Prostate gland (tissue), 2 donors: ENCODE measurements at regions of chr4 and their contacts with region 1.

Region 1: GRCh38 chr4:119729835-119730670 is 101.4 kb upstream of the PDE5A start:
- DNase-seq: peak; percentile 32
- H3K4me3 ChIP-seq: no peak overlapping the region
- H3K27ac ChIP-seq: no peak overlapping the region
- H3K4me1 ChIP-seq: no peaks in the 10 kb centered on the region
- H3K27me3 ChIP-seq: no peaks in the 10 kb centered on the region
- CTCF ChIP-seq: no peak
- POLR2A ChIP-seq: no peak

Region 2: DNA sequence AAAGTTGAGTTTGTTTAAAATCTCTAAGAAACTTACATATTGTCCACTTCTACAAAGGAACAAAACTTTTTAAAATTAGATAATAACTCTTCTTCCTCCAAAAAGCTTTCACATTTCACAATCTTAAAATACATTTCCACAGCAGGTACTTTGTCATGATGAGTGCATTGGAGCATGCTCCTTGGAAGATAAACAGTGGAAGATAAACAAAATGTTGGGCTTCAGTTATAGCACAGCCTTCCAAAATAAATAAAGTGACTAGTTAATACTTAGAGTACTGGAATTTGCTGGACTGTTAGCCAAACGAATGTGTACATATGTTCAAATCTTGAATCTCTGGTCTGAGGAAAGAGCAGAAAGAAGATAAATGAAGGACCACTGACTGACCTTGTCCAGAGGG is 46.5 kb before region 1 on chr4:
- intact Hi-C with region 1: loop called (anchors 5 kb)
- DNase-seq: peak; percentile 45
- H3K4me3 ChIP-seq: no peak overlapping the region
- H3K27ac ChIP-seq: peak overlapping the region in 1 of 2 donors; percentile 21
- H3K4me1 ChIP-seq: peaks cover 3% of the 10 kb centered on the region
- H3K27me3 ChIP-seq: no peaks in the 10 kb centered on the region
- CTCF ChIP-seq: no peak
- POLR2A ChIP-seq: no peak

Region 3: DNA sequence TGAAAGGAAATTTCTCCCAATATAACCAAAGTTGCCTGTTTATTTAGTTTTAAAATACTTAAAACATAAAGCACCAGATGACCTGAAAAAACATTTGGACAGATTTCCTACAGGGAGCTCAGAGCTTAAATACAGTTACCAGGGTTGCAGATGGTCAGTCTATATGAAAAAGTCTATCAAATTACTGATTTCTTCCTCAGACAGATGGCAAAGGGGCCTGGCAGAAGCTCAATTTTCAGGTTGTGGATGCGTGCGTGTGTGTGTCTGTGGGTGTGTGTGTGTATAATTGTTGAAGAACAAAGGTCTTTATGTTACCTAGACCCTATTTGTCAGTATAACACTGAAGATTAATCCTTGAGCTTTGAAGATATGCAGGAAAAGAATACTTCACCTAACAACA is 167.2 kb after region 1 on chr4:
- intact Hi-C with region 1: loop called (anchors 10 kb)
- DNase-seq: no peak
- H3K4me3 ChIP-seq: no peak overlapping the region
- H3K27ac ChIP-seq: no peak overlapping the region
- H3K4me1 ChIP-seq: no peaks in the 10 kb centered on the region
- H3K27me3 ChIP-seq: no peaks in the 10 kb centered on the region
- CTCF ChIP-seq: no peak
- POLR2A ChIP-seq: no peak

Region 4: GRCh38 chr4:119939071-119939995 is 209.3 kb after region 1 on chr4:
- intact Hi-C with region 1: loop called (anchors 5 kb)
- DNase-seq: no peak
- H3K4me3 ChIP-seq: no peak overlapping the region
- H3K27ac ChIP-seq: peak overlapping the region in 1 of 2 donors; percentile 35
- H3K4me1 ChIP-seq: no peaks in the 10 kb centered on the region
- H3K27me3 ChIP-seq: no peaks in the 10 kb centered on the region
- CTCF ChIP-seq: no peak
- POLR2A ChIP-seq: no peak

Region 5: DNA sequence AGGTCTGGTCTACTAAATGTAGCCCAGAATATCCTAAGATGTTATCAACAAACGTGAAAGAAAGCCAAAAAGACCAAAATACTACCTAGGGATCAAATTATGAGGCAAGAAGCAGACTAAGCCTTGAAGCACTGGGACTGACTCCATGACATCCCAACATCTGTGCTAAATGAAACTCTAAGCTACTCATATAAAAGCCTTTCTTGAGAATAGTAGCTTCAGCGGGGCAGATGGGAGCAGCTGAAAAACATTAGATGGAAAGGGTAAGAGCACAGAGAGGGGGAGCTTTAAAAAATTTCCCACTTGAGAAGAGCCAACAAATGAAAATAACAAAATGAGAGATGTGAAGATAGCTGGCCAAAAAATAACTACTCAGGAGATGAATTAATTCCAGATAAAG is 254.9 kb after region 1 on chr4:
- intact Hi-C with region 1: loop called (anchors 10 kb)
- DNase-seq: no peak
- H3K4me3 ChIP-seq: no peak overlapping the region
- H3K27ac ChIP-seq: no peak overlapping the region
- H3K4me1 ChIP-seq: no peaks in the 10 kb centered on the region
- H3K27me3 ChIP-seq: no peaks in the 10 kb centered on the region
- CTCF ChIP-seq: no peak
- POLR2A ChIP-seq: no peak

Region 6: DNA sequence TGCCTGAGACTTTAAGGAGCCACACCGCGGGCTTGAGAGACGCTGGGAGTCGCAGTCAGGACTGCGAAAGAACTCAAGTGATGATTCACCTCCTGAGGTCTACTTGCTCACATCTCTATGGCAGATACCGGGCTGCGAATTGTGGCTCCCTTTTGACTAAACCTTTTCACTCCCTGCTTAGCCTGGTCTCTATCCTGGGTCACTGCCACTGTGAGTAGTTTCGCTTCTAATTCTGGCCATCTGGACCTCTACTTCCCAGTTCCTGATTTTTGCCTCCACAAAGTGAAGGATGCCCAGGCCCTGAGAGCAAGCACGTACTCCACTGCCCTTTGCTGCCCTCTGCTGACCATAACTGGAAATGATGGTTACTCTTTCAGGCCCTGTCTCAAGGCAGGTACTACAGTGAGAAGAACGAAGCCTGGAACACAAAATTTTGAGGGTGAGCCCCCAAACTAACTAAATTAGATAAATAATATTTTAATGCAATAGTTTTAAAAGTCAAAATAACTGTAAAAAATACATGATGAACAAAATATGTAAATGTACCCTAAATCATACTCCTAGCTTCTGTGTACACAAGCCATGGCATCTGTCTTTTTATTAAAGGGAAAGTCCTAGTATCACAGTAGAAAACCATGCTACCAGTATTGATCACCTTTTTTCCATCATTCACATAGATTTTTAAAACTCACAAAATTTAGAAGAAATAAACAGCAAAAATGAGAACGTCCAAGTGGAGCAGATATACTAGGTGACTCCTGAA is 319.9 kb after region 1 on chr4:
- intact Hi-C with region 1: loop called (anchors 5 kb)
- DNase-seq: peak; percentile 75
- H3K4me3 ChIP-seq: no peak overlapping the region
- H3K27ac ChIP-seq: peak overlapping the region; percentile 10 to 44
- H3K4me1 ChIP-seq: no peaks in the 10 kb centered on the region
- H3K27me3 ChIP-seq: no peaks in the 10 kb centered on the region
- CTCF ChIP-seq: peak; percentile 43 to 81 (median 74)
- POLR2A ChIP-seq: no peak